ENCODE measurements at regions of chrX and their contacts with region 1.

Region 1: DNA sequence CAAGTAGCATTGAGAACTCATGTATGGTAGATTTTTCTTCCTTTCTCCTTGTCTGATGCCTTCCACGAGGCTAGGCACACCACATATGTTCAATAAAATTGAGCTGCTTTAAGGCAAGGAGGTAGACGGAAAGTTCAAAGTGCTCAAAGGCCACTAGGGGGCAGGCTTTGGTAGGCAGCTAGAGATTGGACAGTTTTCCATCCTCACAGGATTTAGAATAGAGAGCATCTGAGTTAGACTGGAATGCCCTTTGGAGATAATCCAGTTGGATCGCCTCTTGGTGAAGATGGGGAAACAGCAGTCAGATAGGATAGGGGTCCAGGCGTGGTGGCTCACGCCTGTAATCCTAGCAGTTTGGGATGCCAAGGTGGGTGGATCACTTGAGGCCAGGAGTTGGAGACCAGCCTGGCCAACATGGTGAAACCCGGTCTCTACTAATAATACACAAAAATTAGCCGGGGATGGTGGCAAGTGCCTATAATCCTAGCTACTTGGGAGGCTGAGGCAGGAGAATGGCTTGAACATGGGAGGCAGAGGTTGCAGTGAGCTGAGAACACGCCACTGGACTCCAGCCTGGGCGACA is 30.4 kb downstream of the ELF4 start:
- DNase-seq: peak in 3 of 5 donors; percentile 40 to 61 (median 53)
- ATAC-seq: peak; percentile 30 to 66 (median 53)
- H3K4me3 ChIP-seq: no peak overlapping the region
- H3K27ac ChIP-seq: no peak overlapping the region
- H3K4me1 ChIP-seq: peaks cover 0 to 45% (median 12%) of the 10 kb centered on the region in 12 donors
- H3K27me3 ChIP-seq: no peaks in the 10 kb centered on the region
- CTCF ChIP-seq: peak; percentile 55 to 77 (median 64)
- POLR2A ChIP-seq: no peak

Region 2: DNA sequence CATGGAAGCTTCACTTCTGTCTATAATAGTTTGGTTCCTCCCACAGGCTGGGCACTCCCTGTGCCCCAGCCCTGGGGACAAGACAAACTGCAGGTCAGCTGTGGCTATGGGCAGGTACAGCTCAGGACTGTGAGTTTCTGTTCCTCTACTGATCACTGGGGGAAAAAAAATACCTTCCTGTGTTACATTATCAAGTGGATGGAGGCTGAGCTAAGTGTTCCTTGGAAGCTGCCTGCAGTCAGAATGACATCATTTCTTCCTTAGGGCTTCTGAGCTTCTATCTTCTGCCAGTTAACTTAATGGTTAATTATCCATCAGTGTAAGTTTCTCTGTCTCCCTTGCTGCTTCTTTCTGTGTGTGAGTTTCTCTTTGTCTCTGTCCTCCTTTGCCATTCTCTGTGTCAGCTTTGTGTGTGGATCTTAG is 96.5 kb after region 1 on chrX:
- intact Hi-C with region 1: no loop called
- DNase-seq: no peak
- ATAC-seq: no peak
- H3K4me3 ChIP-seq: no peak overlapping the region
- H3K27ac ChIP-seq: no peak overlapping the region
- H3K4me1 ChIP-seq: peaks cover 0 to 33% (median 12%) of the 10 kb centered on the region in 12 donors
- H3K27me3 ChIP-seq: no peaks in the 10 kb centered on the region
- CTCF ChIP-seq: no peak
- POLR2A ChIP-seq: no peak

Region 3: GRCh38 chrX:130190801-130191200 is 110.9 kb after region 1 on chrX:
- intact Hi-C with region 1: loop called (anchors 1 to 5 kb)
- DNase-seq: no peak
- ATAC-seq: no peak
- H3K4me3 ChIP-seq: no peak overlapping the region
- H3K27ac ChIP-seq: no peak overlapping the region
- H3K4me1 ChIP-seq: no peaks in the 10 kb centered on the region
- H3K27me3 ChIP-seq: peaks cover 0 to 4% (median 0%) of the 10 kb centered on the region in 9 donors
- CTCF ChIP-seq: no peak
- POLR2A ChIP-seq: no peak

Region 4: DNA sequence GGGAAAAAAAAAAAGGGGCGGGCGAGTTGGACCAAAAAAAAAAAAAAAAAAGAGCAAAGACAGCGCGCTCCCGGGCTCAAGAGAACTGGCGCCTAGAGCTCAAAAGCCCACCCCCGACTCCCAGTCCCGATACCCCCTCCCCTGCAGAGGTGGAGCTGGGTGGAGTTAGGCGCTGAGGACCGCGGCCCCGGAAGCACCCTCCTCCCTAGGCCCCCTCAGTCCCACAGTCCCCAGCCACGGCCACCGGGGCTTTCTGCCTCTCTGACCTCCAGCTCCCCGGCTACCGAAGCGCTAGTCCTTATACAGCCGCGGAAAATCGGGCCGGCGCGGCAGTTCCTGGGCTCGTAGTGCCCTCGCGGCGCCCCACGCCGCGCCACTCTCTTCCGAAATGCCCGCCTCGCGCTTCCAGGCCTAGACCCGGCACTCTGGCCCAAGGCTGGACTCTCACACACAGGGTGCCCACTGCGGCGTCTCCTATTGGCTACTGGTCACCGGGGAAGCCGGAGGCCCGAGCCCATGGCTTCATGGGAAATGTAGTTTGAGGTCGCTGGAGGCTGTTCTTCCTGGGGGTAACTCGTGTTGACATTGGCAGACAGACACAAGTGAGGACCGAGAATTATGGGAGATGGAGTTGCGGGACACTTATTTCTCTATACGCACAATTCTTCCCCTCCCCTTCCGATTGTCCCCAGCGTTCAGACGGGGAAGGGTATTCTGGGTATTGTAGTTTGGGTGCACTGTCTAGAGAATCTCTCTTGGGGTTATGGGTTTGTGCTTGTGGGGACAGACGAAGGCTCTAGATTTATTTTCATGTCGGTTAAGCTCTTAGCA is 823.1 kb after region 1 on chrX and contains the start of gene ENOX2:
- intact Hi-C with region 1: loop called in 1 of 10 experiments (anchors 5 kb)
- DNase-seq: peak; percentile 92 to 96 (median 94)
- ATAC-seq: peak; percentile 99
- H3K4me3 ChIP-seq: peak within 1 kb of the TSS; percentile 48 to 80 (median 66)
- H3K27ac ChIP-seq: peak within 1 kb of the TSS; percentile 83 to 96 (median 90)
- H3K4me1 ChIP-seq: peaks cover 0 to 5% (median 0%) of the 10 kb centered on the region in 12 donors
- H3K27me3 ChIP-seq: peaks cover 0 to 3% (median 0%) of the 10 kb centered on the region in 9 donors
- CTCF ChIP-seq: no peak
- POLR2A ChIP-seq: peak; percentile 52 to 85
- total RNA-seq, gene ENOX2: 14.0 to 23.0 (median 17.6) TPM

Measured in heart left ventricle (tissue), 16 donors.